OCI-LY7 (cell line): ENCODE measurements at regions of chrX and their contacts with region 1.

Region 1: DNA sequence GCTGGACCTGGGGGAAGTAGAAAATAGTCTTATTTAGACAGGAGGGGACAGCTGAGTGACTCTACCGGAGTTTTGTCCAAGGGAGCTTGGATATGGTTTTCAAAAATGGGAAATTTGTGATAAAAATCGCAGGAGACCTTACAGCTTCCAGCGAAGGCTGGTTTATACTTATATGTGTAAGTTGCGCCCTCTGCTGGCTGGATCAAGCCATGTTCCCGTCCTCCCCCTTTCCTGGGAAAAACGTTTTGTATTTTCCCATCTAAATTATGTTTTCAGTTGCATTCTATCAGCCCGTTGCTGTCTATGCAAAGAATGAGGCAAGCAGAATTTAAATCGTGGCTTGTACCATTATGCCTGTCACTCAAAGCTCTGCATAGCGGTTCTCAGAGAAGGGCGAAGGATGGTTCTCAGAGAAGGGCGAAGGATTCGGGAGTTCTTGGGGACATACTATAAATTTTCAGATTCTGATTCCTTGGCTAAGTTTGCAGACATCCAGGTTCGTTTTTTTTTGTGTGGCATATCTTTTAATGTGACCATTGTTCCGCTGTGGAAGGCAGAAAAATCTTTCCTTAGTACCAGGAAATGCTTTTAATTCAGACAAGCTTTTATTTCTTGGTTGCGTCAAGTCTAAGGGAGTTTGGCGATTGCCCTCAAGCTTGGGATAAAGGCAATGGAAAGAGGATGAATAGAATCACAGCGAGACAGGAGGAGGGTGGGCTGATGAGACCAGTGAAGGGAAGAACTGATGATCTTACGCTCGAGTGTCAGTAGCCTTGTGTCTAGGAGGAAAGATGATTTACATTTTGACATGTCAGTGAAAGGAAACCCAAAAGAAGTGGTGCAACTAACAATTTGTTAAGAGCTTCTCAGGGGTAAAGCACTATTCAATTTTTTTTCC is 128.5 kb upstream of the ARX start:
- DNase-seq: peak; percentile 29
- H3K4me3 ChIP-seq: no peak overlapping the region
- H3K27ac ChIP-seq: no peak overlapping the region
- H3K4me1 ChIP-seq: no peaks in the 10 kb centered on the region
- CTCF ChIP-seq: peak; percentile 78

Region 2: GRCh38 chrX:24759786-24760185 is 384.5 kb before region 1 on chrX:
- CTCF ChIA-PET with region 1: no interaction called
- POLR2A ChIA-PET with region 1: no interaction called
- intact Hi-C with region 1: loop called (anchors 5 kb)
- DNase-seq: no peak
- H3K4me3 ChIP-seq: no peak overlapping the region
- H3K27ac ChIP-seq: no peak overlapping the region
- H3K4me1 ChIP-seq: no peaks in the 10 kb centered on the region
- CTCF ChIP-seq: no peak